Activated T-helper 1 cell treated with anti-CD3 and anti-CD28 coated beads, Interleukin-12 subunit alpha, Interleukin-12 subunit beta, Interleukin-2, Interleukin-4 antibody, amounts not matched to agents 30 ng/mL and 10 ng/mL and 1 ng/mL, durations not matched to agents 14 hours and 24 hours and 36 hours (primary cell): ENCODE measurements at regions of chr3 and their contacts with region 1.

Region 1: GRCh38 chr3:196711838-196712513 is at the starts of genes CEP19 and PIGX:
- DNase-seq: peak; percentile 91
- H3K4me3 Mint-ChIP-seq: peak within 1 kb of the TSS; percentile 90
- H3K27ac Mint-ChIP-seq: peak within 1 kb of the TSS; percentile 98
- H3K4me1 Mint-ChIP-seq: peaks cover 49% of the 10 kb centered on the region
- H3K27me3 Mint-ChIP-seq: no peaks in the 10 kb centered on the region
- total RNA-seq, gene CEP19: 3.9 and 4.1 TPM in 2 replicates
- total RNA-seq, gene PIGX: 49.7 and 52.1 TPM in 2 replicates

Region 2: DNA sequence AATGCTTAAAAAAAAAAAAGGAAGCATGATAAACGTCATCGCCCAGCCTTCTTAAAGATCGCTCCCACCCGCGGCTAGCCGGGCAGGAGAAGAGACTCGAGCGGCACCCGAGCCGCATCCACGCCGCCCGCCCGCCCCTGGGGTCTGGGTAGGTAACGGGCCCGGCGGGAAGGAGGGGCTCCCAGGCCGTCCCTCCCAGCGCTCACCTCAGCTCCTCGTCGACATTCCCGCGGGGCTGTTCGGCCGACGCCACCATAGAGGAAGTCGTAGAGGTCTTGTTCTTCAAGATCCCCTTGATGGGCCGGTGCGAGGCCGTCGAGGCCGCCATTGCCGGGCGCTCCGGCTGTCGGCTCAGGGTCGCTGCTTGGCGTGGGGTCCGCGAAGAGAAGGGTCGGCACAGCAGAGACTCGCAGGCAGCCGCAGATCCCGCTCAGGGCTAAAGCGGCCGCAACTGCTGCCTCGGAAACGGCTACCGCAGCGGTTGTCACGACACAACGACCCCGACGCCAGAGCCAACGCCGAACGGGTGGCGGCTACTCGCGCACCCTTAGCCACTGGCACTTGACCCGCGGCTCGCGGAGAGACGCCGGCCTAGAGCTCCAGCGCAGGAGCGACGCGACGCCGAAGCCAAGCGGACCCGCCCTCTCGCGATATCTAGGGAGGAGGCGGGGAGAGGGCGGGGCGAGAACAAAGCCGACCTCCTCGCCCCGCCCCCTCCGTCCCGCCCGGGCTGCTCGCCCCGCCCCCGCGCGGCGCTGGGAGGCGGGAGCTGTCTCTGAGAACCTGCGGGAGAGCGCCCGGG is 1169.1 kb before region 1 on chr3 and contains the start of gene PPP1R2:
- intact Hi-C with region 1: loop called (anchors 10 kb)
- DNase-seq: peak; percentile 88
- H3K4me3 Mint-ChIP-seq: peak within 1 kb of the TSS; percentile 88
- H3K27ac Mint-ChIP-seq: peak within 1 kb of the TSS; percentile 82
- H3K4me1 Mint-ChIP-seq: peaks cover 84% of the 10 kb centered on the region
- H3K27me3 Mint-ChIP-seq: no peaks in the 10 kb centered on the region
- total RNA-seq, gene PPP1R2: 98.8 and 106 TPM in 2 replicates

Region 3: GRCh38 chr3:195839282-195840010 is 872.5 kb before region 1 on chr3:
- intact Hi-C with region 1: no loop called
- DNase-seq: no peak
- H3K4me3 Mint-ChIP-seq: no peak overlapping the region
- H3K27ac Mint-ChIP-seq: no peak overlapping the region
- H3K4me1 Mint-ChIP-seq: no peaks in the 10 kb centered on the region
- H3K27me3 Mint-ChIP-seq: no peaks in the 10 kb centered on the region

Region 4: GRCh38 chr3:196621611-196622010 is 90.4 kb before region 1 on chr3:
- intact Hi-C with region 1: no loop called
- DNase-seq: no peak
- H3K4me3 Mint-ChIP-seq: no peak overlapping the region
- H3K27ac Mint-ChIP-seq: no peak overlapping the region
- H3K4me1 Mint-ChIP-seq: peaks cover 26% of the 10 kb centered on the region
- H3K27me3 Mint-ChIP-seq: no peaks in the 10 kb centered on the region

Region 5: GRCh38 chr3:196632046-196632751 is 79.8 kb before region 1 on chr3:
- intact Hi-C with region 1: loop called (anchors 1 kb)
- DNase-seq: peak; percentile 90
- H3K4me3 Mint-ChIP-seq: peak overlapping the region; percentile 86
- H3K27ac Mint-ChIP-seq: peak overlapping the region; percentile 93
- H3K4me1 Mint-ChIP-seq: peaks cover 52% of the 10 kb centered on the region
- H3K27me3 Mint-ChIP-seq: no peaks in the 10 kb centered on the region

Region 6: DNA sequence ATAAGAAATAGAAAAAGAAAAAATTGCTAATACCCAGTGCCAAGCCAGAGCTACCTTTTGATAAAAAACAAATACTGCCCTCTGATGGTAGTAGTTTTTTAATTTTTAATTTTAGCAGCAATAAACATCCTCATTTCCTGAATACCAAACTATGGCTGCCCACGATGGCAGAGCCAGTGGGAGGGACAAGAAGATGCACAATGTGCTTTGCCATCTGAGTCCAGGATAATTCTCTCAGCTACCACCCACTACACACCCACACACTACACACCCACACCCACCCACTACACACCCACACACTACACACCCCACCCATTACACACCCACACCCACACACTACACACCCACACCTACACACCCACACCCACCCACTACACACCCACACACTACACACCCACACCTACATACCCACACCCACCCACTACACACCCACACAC is 17.8 kb before region 1 on chr3:
- intact Hi-C with region 1: loop called (anchors 1 kb)
- DNase-seq: no peak
- H3K4me3 Mint-ChIP-seq: peak overlapping the region; percentile 19
- H3K27ac Mint-ChIP-seq: peak overlapping the region; percentile 88
- H3K4me1 Mint-ChIP-seq: no peaks in the 10 kb centered on the region
- H3K27me3 Mint-ChIP-seq: peaks cover 3% of the 10 kb centered on the region

Region 7: DNA sequence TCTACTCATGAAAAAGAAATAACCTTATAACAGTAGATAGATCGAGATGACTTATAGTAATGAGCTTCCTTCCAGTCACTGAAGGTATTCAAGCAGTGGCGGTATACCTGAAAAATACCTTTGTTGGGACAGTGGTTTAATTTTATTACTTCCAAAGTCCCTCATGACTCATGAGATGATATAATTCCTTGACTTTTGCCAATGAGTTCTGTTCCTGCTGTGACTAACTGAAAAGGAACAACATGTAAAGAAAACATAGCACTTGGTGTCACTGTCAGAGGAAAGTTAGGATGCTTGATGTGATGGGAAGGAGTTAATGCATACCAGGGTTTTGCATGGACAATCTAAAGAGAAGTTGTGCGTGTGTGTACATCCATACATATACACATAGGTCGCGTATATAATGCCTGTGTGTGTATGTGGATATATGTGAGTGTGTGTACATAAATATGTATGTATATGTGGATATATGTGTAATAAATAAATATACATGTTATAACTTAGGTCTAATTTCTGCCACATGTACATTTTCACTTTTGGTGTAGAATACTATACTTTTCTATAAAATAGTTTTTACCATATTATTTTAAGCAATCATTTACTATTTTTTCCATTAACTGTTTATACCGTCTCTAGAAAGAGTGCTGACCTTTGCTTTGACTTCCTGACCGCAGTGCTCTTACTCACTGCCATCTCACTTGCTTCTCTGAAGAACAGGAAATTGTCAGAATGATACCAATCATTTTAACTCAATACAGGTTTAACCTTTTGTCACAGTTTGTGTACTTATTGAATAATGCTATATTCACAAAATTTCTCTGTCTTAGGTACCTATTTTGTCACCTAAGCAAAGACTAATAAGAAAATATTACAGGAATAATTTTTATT is 15.1 kb after region 1 on chr3:
- intact Hi-C with region 1: loop called (anchors 1 kb)
- DNase-seq: no peak
- H3K4me3 Mint-ChIP-seq: no peak overlapping the region
- H3K27ac Mint-ChIP-seq: peak overlapping the region; percentile 68
- H3K4me1 Mint-ChIP-seq: peaks cover 37% of the 10 kb centered on the region
- H3K27me3 Mint-ChIP-seq: no peaks in the 10 kb centered on the region

Region 8: DNA sequence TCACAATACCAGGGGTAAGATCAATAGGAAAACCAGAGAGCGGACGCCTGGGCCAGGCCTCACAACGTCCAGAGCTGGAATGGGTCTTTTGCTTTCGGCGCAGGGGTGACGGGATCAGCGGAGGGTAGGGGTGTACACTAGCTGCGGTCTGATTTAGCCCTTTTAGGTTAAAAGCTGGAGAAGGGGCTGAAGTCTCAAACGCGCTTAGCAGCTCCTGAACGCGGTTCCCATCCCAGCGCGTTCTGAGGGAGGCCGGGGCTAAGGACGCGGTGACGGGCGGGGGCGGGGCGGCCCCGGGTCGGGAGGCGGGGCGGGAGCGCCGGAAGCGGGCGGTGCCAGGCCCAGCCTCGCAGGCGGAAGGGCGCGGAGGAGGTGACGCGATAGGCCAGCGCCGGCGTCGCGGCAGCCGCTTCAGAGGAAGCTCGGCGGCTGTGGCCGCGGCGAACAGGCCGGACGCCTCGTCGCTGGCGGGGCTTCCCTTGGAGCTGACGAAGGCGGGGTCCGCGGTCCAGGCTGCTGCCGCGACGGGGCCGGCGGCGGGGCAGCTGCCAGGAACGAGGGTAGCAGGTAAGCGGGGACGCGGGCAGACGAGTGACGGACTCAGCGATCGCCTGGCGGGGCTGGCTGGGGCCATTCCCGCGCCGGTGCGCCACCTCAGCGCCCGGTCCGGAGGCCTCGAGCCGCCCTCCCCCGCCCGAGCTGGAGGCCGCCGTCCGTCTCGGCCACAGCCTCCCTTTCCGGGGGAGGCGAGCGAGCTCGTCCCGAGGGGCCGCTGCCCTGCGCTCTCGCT is 155.7 kb after region 1 on chr3 and contains the start of gene SENP5:
- intact Hi-C with region 1: loop called (anchors 1 kb)
- DNase-seq: peak; percentile 86
- H3K4me3 Mint-ChIP-seq: peak within 1 kb of the TSS; percentile 100
- H3K27ac Mint-ChIP-seq: peak within 1 kb of the TSS; percentile 98
- H3K4me1 Mint-ChIP-seq: peaks cover 12% of the 10 kb centered on the region
- H3K27me3 Mint-ChIP-seq: peaks cover 4% of the 10 kb centered on the region
- total RNA-seq, gene SENP5: 45.3 and 50.7 TPM in 2 replicates

Region 9: DNA sequence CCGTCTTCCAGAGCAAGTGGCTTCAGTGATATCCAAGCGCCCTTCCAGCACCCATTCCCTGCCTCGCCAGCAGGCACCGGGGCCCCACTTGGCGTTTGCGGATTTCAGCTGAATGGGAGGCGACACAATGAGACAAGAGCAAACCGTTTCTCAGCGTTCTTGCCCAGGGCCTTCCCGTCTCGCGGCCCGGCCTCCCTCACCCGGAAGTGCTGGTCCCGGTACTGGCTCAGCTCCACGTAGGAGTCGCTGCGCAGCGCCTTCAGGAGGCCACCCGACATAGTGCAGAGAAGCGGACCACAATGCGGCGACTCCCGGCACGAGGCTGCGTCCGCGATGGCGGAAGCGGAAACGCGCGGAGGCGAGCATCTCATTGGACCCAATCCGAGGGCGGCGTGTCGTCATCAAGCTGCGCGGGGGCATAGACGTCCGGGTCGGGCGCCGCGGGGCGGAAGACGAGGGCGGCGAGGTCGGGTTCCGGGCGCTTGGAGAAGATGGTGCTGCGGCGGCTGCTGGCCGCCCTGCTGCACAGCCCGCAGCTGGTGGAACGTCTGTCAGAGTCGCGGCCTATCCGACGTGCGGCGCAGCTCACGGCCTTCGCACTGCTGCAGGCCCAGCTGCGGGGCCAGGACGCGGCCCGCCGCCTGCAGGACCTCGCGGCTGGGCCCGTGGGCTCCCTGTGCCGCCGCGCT is 230.4 kb after region 1 on chr3 and contains the start of gene NCBP2:
- intact Hi-C with region 1: loop called (anchors 1 kb)
- DNase-seq: peak; percentile 100
- H3K4me3 Mint-ChIP-seq: peak within 1 kb of the TSS; percentile 100
- H3K27ac Mint-ChIP-seq: peak within 1 kb of the TSS; percentile 97
- H3K4me1 Mint-ChIP-seq: peaks cover 55% of the 10 kb centered on the region
- H3K27me3 Mint-ChIP-seq: peaks cover 2% of the 10 kb centered on the region
- total RNA-seq, gene NCBP2: 102 and 111 TPM in 2 replicates